GM12878 (cell line): ENCODE measurements at regions of chr16 and their contacts with region 1.

Region 1: DNA sequence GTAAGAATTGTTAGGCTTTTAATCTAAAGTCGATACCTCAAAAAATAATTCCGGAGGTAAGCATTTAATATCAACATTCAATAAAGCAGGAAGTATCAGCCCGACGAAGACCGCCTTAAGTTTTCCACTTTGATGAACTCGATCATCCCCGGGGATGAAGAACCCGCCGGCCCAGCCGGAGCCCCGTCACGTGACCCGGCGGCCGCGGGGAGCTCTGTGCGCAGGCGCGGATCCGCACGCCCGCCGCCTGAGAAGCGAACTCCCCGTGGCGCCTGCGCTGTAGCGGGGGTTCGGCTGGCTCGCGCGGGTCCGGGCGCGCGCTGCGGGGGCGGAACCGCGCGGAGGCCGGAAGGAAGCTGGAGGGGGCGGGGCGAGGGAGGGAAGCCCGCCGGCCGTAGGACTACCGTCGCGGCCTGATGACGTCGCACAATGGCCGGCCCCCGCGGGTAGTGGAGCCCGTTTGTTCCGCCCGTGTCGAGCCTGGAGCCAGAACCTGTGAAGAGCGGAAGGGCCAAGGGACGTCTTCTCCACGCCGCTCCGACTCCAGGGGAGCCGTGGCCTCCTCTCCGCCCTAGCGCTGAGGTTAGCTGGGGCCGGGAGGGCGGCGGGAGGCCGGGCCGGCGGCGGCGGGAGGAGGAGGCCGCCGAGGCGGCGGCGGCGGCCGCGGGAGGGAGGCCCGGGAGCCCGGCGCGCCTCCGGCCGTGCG is at the start of gene ZC3H18:
- DNase-seq: peak; percentile 68
- ATAC-seq: peak; percentile 91
- H3K4me3 ChIP-seq: peak within 1 kb of the TSS; percentile 98
- H3K27ac ChIP-seq: peak within 1 kb of the TSS; percentile 60
- H3K4me1 ChIP-seq: peaks cover 5% of the 10 kb centered on the region; the same call in 1 of the 2 replicates
- H3K27me3 ChIP-seq: no peaks in the 10 kb centered on the region
- CTCF ChIP-seq: no peak
- EP300 ChIP-seq: no peak
- POLR2A ChIP-seq: peak; percentile 92
- RAD21 ChIP-seq: no peak
- polyA plus RNA-seq, gene ZC3H18: 1.0 to 3.2 TPM

Region 2: DNA sequence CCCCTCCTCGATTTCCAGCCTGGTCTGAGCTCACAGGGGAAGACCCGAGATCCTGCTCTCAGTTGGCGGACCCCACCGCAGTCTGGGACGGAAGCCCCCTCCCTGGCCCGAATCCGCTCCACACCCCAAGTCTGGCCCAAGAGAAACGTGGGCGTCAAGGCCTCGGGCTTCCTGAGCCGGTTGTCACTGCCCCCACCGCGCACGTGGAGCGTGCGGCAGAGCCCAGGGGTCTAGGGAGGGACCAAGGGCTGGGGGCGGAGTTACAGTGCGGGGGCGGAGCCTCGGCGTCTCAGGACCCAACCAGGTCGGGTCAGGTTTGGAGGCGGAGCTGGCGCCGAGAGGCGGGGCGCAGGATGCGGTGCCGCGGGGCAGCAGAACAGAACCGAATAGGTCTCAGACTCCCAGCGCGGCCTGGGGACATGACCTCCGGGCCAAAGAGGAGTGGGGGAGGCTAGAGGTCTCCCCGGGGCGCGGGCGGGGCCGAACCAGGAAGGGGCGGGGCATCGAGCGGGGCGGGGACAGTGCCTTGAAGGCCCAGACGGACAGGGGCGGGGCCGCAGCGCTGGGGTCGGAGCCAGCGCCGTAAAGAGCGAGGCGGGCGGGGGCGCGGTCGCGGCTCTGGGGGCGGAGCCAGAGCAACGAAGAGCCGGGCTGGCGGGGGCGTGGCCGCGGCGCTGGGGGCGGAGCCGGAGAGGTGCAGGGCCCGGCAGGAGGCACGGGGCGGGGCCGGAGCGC is 117.5 kb before region 1 on chr16:
- CTCF ChIA-PET with region 1: interaction called, 3 read pairs
- POLR2A ChIA-PET with region 1: no interaction called
- RAD21 ChIA-PET with region 1: interaction called, 4 read pairs
- SMC1A ChIA-PET with region 1: no interaction called
- in situ Hi-C with region 1: loop called (anchors 5 kb)
- intact Hi-C with region 1: no loop called
- DNase-seq: peak; percentile 67
- ATAC-seq: peak; percentile 72
- H3K4me3 ChIP-seq: peak overlapping the region; percentile 64
- H3K27ac ChIP-seq: peak overlapping the region; percentile 79
- H3K4me1 ChIP-seq: peaks cover 29% of the 10 kb centered on the region
- H3K27me3 ChIP-seq: peaks cover 0 to 2% of the 10 kb centered on the region in 2 experiments; a peak in 1 of 4 replicates
- CTCF ChIP-seq: no peak
- EP300 ChIP-seq: no peak
- POLR2A ChIP-seq: 0 out of 2 replicates have a peak, but pooled peaks have one; percentile 9
- RAD21 ChIP-seq: no peak

Region 3: DNA sequence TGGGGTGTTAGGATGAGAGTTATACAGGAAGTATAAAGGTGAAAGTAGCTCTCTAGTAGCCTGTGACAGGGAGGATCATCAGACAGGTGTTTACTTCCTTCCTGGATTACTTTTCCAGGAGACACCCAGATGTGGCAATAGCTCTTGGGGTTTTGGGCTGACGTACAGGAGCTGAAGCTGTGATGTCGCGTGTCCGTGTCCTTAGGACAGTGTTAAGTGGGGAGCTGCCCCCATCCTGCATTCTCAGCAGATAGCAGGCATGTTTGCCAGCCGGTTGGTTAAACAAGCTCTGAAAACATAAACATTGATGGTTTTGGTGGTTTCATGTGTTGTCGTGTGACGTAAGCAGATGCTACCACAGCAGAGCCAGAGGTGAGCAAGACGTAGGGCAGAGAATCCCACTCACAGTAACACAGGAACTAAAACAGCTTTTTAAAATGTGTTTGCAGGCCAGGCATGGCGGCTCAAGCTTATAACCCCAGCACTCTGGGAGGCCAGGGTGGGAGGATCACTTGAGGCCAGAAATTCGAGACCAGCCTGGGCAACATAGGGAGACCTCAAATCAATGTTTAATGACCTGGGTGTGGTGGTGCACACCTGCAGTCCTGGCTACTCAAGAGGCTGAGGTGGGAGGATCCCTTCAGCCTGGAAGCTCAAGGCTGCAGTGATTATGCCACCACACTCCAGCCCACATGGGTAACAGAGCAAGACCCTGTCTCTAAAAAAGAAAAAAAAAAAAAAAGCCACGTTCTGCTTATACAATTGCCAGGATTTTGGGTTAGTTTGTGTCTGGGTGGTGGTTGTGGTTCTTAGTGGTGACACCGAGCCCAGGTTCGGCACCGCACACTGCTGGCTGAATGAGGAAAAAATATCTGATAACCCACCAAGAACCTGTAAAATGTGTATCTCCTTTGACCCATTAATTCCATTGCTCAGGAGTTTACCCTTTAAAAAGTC is 50.0 kb after region 1 on chr16:
- CTCF ChIA-PET with region 1: no interaction called
- POLR2A ChIA-PET with region 1: no interaction called
- RAD21 ChIA-PET with region 1: no interaction called
- SMC1A ChIA-PET with region 1: no interaction called
- in situ Hi-C with region 1: loop called (anchors 5 kb)
- intact Hi-C with region 1: no loop called
- DNase-seq: no peak
- ATAC-seq: no peak
- H3K4me3 ChIP-seq: no peak overlapping the region
- H3K27ac ChIP-seq: no peak overlapping the region
- H3K4me1 ChIP-seq: no peaks in the 10 kb centered on the region
- H3K27me3 ChIP-seq: no peaks in the 10 kb centered on the region
- CTCF ChIP-seq: no peak
- EP300 ChIP-seq: no peak
- POLR2A ChIP-seq: no peak
- RAD21 ChIP-seq: no peak